GM13976 (cell line): ENCODE measurements at regions of chr3 and their contacts with region 1.

Region 1: DNA sequence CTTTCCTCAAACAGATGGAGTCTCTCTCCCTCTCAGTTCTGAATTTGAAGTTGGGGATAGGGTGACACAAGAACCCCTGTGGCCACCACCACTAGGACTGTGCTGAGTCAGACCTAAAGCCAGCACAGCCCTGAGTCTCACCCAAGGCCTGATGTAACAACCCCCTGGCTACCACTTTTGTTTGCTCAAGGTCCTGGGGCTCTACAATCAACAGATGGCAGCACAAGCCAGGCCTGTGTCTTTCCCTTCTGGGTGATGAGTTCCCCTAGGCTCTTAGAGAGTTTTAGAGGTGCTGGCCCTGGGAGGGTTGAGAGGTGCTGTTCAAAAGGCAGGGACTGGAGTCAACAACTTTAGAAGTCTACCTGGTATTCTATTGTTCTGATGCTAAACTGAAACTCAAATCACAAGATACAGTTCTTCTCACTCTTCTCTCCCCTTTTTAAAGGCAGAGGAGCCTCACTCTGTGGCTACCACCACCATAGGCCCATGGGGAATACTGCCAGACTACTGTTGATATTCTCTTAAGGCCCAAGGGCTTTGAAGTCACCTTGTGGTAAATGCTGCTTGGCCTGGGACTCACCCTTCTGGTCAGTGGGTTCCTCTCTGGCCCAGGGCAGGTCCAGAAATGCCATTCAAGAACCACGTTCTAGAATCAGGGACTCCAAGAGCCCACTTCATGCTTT is 6.5 kb downstream of the OR5K4 start:
- DNase-seq: no peak
- CTCF ChIP-seq: no peak

Region 2: GRCh38 chr3:98513091-98513511 is 153.0 kb after region 1 on chr3:
- in situ Hi-C with region 1: loop called (anchors 10 kb)
- DNase-seq: no peak
- CTCF ChIP-seq: no peak